ENCODE measurements at regions of chr22 and their contacts with region 1.

Region 1: DNA sequence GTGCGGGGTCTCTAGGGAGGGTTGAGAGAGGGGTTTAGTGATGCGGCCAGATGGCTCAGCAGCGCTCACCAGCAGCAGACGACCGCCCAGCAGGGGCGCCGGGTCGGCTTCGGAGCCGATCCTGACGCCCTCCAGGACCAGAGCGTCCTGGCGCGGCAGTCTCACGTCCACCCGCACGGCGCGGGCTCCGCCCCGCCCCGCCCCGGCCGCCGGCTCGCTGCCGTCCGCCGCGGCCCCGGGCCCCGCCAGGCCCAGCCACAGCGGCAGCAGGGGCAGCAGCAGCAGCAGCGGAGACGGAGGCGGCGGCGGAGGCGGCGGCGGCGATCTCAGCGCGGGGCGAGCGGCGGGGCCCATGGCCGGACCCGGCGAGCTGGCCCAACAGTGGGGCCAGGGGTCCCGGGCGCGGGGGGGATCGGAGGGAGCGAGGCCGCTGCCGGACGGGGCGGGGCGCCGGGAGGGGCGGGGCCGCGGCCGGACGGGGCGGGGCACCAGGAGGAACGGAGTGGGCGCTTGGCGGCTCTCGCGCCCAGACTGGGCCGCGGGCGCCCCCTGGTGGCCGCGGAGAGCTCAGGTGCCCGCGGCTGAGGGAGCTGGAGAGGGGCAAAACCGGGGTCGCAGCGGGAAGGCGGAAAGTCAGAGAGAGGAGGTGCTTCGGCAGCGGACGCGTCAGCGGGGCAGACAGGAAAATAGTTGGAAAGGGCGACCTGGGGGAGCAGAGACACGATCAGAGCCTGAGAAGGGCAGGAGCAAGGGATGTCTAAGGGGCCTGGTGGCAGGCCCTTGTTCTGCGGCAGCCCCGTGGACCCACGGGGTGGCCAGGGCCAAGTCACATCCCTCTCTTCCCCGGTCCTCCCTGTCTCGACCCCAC is at the start of gene RNF215:
- DNase-seq: peak; percentile 84
- ATAC-seq: peak; percentile 92 to 96
- total RNA-seq, gene RNF215: 7.5 to 12.9 TPM

Region 2: GRCh38 chr22:30104501-30105156 is 282.6 kb before region 1 on chr22:
- intact Hi-C with region 1: loop called (anchors 5 to 10 kb)
- DNase-seq: no peak
- ATAC-seq: no peak

Region 3: DNA sequence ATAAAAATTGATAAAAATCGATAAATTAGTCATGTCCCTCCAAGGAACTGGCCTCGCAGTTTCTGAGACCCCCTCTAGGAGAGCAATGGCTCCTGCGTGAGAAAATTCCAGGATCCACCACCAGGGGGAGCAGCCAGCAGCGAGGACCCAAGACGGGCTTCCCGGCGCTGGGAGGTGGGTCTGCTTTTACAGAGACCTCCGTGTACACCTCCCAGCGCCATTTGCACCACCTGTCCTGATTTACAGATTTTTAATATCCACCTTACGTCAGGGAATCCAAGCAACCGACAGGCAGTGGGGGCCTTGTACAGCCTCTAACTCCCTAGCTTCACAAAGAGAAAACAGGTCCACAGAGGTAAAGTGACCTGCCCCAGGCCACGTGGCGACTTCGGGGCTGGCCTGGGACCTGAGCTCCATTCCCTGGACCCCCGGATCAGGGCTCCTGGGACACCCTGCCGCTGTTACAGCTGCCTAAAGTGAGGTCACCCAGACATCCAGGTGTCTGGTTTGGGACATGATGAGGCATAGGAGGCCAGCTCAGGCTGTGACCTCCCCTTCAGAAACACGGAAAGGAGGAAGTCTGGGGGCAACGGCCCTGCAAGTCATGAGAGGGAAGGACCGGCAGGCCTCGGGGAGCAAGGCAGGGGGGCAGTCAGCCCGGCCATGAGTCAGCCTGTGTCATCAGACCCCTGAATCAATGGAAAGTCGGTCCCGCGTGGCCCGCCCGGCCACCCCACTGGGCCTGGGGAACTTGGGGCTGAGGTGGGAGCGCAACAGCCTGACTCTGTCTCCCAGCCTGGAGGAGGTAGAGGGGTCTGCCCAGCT is 124.1 kb before region 1 on chr22:
- intact Hi-C with region 1: loop called (anchors 1 to 5 kb)
- DNase-seq: peak; percentile 84
- ATAC-seq: peak; percentile 47 to 55

Region 4: DNA sequence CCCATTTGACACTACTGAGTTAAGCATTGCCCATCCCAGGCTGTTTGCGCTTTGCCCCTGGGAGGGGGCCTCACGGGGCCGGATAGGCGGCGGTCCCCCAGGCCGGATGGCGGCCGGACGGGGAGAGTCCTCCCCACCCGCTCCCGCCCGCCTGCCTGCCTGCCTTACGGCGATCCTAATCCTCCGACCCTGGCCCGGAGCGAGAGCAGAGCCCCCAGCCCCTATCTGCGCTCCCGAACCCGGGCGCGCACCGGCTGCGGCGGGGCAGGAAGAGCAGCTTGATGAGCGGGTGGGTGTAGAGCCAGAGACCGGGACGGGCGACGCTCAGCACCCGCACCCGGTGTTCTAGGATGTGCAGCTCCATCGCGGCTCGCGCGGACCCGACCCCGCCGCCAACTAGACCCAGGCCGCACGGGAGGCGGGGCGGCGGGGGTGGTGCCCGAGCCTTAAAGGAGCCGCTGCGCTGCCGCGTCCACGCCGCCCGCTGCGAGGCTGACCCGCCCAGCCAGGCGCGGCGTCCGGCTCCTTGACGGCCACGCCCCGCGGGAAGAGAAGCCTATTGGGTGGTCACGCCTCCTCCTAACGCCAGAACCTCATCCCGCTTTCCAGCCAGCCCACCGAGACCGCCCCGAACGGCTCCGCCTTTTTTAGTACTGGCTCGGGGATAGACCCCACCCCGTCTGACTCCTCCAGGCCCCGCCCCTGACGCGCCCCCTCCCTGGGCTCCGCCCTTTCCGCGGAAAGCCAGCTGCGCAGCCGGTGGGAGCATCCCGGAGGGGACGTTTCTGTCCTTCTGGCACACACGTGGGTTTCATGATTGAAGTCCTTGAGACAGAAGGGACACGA is 97.8 kb before region 1 on chr22 and contains the start of gene CASTOR1:
- intact Hi-C with region 1: loop called (anchors 1 to 5 kb)
- DNase-seq: peak; percentile 99
- ATAC-seq: peak; percentile 89 to 91
- total RNA-seq, gene CASTOR1: 7.4 to 9.4 TPM

Region 5: DNA sequence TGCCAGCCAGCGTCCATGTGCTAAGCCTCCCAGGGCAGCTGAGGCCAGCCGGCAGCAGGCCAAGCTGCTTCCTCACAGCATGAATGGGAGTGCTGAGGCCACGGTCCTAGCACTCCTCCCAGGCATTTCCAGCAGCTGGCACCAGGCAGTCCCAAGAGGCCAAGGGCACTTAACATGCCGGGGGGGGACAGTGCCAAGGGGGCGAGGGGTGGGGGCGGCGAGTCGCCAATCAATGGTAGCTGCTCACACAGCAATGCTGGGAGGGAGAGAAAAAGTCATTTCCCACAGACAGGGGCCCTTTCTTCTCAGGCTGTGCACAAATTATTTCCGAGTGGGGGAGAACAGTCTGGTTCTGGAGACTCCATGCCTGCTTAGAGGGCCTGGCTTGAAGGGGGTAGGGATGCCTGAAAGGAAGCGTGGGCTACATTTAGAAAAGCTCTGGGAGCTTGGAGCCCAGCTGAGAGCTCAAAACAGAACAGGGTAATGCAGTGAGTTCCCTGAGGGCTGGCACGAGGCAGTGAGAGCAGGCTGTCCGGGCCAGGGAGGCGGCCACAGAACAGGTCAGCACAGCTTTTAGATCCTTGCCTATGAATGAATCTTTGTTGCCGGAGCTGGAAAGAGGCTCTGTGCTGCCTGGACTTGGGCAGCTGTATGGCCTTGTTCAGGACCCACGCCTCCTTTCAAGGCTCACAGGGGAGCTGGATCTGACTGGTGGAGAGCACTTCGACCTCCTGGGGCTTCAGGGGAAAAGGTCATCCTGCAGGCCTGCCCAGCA is 46.1 kb before region 1 on chr22:
- intact Hi-C with region 1: no loop called
- DNase-seq: peak; percentile 65
- ATAC-seq: peak; percentile 81 to 88

Region 6: GRCh38 chr22:30426395-30427353 is 39.5 kb after region 1 on chr22:
- intact Hi-C with region 1: loop called in 1 of 2 experiments (anchors 5 kb)
- DNase-seq: peak; percentile 90
- ATAC-seq: peak; percentile 23 to 25

Region 7: DNA sequence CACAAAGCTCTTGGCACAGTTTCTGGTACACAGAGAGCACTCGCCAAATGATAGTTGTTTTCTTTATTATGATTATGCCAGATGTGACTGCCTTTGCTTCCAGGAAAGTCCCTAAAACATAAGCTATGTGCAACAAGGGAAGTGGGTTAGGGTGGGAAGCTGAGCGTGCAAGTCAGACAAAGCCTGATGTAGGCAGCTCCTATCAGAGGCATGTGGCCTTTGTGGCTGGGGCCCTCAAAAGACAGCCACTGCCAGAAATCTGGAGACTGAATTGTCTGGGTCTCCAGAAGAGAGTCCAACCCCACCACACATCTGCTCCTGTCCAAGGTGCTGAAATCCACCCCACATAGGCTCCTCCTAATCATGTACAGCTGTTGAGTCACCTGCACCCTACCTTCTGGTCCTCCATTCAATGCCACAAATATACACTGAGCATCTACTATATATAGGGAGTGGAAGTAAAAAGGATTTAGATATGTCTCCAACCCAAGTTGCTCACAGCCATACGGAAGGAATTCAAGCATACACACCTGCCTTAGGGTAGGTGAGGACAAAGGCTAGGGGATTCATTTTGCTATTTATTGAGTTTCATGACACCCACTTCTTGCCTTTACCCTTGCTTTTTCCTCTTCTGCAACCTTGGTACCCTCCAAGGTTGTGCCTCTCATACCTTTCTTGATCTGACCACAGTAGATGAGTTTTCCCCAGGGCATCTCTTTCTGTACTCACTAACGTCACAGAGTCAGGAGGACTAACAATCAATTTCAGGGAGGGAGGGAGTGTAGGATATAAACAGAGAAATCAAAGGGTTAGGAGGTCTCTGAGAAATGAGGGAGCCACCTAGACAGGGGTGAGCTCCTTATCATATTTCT is 72.2 kb after region 1 on chr22:
- intact Hi-C with region 1: no loop called
- DNase-seq: no peak
- ATAC-seq: no peak

Region 8: GRCh38 chr22:30474121-30474520 is 86.9 kb after region 1 on chr22:
- intact Hi-C with region 1: no loop called
- DNase-seq: no peak
- ATAC-seq: no peak

Region 9: GRCh38 chr22:30485362-30485988 is 98.3 kb after region 1 on chr22:
- intact Hi-C with region 1: loop called (anchors 5 to 10 kb)
- DNase-seq: peak; percentile 67
- ATAC-seq: peak; percentile 89 to 94

Measured in left cardiac atrium (tissue), 4 donors.